ENCODE measurements at regions of chr1 and their contacts with region 1.

Region 1: DNA sequence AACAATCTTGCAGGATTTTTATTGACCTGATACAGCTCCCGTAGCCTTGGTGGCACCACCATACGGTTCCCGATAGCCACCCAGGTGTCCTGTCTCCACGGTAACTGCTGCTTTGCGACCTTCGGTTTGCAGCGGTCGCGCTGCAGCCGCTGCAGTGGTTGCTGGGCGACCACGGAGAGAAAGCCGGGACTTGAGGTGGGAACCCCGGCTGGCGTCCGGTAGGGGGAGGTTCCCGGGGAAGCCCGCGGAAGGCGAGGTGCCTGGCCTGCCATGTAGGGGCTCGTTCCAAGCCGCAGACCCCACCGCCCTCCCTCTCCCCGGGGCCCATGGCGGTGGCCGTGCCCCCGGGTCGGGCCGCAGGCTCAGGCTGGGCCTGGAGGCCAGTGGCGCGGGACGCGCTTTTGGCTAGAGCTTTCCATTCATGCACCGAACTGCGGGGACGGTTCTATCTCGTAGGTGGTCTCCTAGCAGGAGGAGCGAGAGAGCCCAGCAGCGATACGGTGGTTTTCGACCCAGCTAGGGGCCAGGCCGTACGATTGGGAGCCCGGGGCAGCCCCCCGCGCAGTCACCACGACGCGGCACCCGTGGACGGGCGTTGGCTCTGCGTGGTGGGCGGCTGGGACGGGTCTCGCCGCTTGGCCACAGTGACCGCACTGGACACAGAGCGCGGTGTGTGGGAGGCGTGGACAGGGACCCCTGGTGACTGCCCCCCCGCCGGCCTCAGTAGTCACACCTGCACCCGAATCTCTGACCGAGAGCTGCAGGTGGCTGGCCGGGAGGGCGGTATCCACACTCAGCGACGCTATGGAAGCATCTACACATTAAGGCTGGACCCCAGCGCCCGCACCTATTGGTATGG is at the start of gene KLHDC9:
- DNase-seq: peak; percentile 86
- ATAC-seq: peak; percentile 82
- H3K4me3 Mint-ChIP-seq: peak within 1 kb of the TSS; percentile 83
- H3K27ac Mint-ChIP-seq: peak within 1 kb of the TSS; percentile 87
- H3K4me1 Mint-ChIP-seq: peaks cover 45% of the 10 kb centered on the region
- H3K27me3 Mint-ChIP-seq: no peaks in the 10 kb centered on the region
- CTCF ChIP-seq: no peak
- total RNA-seq, gene KLHDC9: 0.43 TPM in 1 of 2 experiments, not detected in the other

Region 2: GRCh38 chr1:160997323-160998038 is 101.0 kb before region 1 on chr1:
- CTCF ChIA-PET with region 1: interaction called, 65 read pairs
- POLR2A ChIA-PET with region 1: interaction called, 19 read pairs
- intact Hi-C with region 1: loop called (anchors 5 kb)
- DNase-seq: peak; percentile 72
- ATAC-seq: peak; percentile 84
- H3K4me3 Mint-ChIP-seq: no peak overlapping the region
- H3K27ac Mint-ChIP-seq: peak overlapping the region; percentile 73
- H3K4me1 Mint-ChIP-seq: peaks cover 21% of the 10 kb centered on the region
- H3K27me3 Mint-ChIP-seq: no peaks in the 10 kb centered on the region
- CTCF ChIP-seq: peak; percentile 57

Region 3: GRCh38 chr1:161038523-161039153 is 59.8 kb before region 1 on chr1 and contains the start of gene TSTD1:
- CTCF ChIA-PET with region 1: interaction called, 79 read pairs
- POLR2A ChIA-PET with region 1: interaction called, 5 read pairs
- intact Hi-C with region 1: loop called (anchors 2 kb)
- DNase-seq: peak; percentile 93
- ATAC-seq: peak; percentile 85
- H3K4me3 Mint-ChIP-seq: peak within 1 kb of the TSS; percentile 91
- H3K27ac Mint-ChIP-seq: peak within 1 kb of the TSS; percentile 96
- H3K4me1 Mint-ChIP-seq: peaks cover 61% of the 10 kb centered on the region
- H3K27me3 Mint-ChIP-seq: no peaks in the 10 kb centered on the region
- CTCF ChIP-seq: no peak
- total RNA-seq, gene TSTD1: 70.8 to 78.7 TPM

Region 4: DNA sequence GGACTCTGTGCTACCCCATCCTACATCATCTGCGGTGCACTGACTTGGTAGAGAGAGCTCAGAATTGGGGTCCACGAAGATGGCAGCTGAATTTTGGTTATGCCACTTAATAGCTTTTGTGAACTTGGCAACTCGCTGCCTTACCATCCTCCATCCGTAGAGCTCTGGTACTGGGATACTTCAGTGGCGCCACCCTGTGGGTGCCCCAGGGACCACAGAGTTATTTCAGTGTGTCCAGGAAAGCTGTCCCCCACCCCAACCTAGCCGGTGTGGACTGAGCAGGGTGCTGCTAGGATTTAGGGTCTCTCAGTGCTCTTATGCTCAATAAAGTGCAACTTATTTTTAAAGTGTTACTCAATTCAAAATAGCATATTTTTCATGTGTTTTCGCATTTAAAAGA is 43.6 kb before region 1 on chr1:
- CTCF ChIA-PET with region 1: interaction called, 18 read pairs
- POLR2A ChIA-PET with region 1: interaction called, 4 read pairs
- intact Hi-C with region 1: no loop called
- DNase-seq: no peak
- ATAC-seq: no peak
- H3K4me3 Mint-ChIP-seq: no peak overlapping the region
- H3K27ac Mint-ChIP-seq: no peak overlapping the region
- H3K4me1 Mint-ChIP-seq: peaks cover 25% of the 10 kb centered on the region
- H3K27me3 Mint-ChIP-seq: no peaks in the 10 kb centered on the region
- CTCF ChIP-seq: no peak

Region 5: DNA sequence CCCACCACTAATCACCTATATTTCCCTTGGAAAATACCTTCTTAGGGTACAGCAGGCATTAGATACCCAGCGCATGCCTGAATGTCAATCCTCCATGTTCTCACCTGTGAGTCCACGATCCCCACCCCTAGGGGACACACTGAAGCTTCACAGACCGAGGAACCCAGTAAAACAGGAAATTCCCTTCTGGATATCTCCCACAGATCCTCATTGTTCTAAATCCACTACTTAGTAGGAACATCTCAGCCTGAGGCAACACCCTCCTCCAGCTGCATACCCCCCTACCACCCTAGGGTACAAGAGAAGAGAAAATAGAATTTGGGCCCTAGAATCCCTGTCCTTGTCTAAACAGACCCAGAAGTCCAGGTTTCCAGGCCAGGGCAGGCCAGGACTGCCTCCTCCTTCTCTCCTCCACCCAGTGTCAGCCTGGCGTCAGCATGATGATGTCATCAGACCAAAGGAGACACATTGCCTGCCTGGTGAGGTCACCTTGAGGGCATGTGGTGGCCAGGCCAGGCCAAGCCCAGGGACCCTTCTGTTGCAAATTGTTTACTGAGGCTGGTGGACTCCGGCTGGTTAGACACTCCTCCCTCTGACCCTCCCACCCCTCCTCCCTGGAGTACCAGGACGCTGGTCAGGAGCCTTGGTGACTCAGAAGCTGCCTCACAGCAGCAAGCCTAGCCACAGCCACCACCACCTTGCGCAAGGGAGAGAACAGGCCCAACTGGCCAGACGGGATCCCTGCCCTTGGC is 15.3 kb before region 1 on chr1:
- CTCF ChIA-PET with region 1: interaction called, 34 read pairs
- POLR2A ChIA-PET with region 1: interaction called, 8 read pairs
- intact Hi-C with region 1: no loop called
- DNase-seq: no peak
- ATAC-seq: peak; percentile 55
- H3K4me3 Mint-ChIP-seq: no peak overlapping the region
- H3K27ac Mint-ChIP-seq: no peak overlapping the region
- H3K4me1 Mint-ChIP-seq: no peaks in the 10 kb centered on the region
- H3K27me3 Mint-ChIP-seq: no peaks in the 10 kb centered on the region
- CTCF ChIP-seq: no peak

Region 6: GRCh38 chr1:161132410-161133219 is 34.2 kb after region 1 on chr1 and contains the start of gene DEDD:
- CTCF ChIA-PET with region 1: interaction called, 15 read pairs
- POLR2A ChIA-PET with region 1: interaction called, 3 read pairs
- intact Hi-C with region 1: no loop called
- DNase-seq: peak; percentile 95
- ATAC-seq: peak; percentile 95
- H3K4me3 Mint-ChIP-seq: no peak within 1 kb of the TSS
- H3K27ac Mint-ChIP-seq: no peak within 1 kb of the TSS
- H3K4me1 Mint-ChIP-seq: peaks cover 41% of the 10 kb centered on the region
- H3K27me3 Mint-ChIP-seq: no peaks in the 10 kb centered on the region
- CTCF ChIP-seq: no peak
- total RNA-seq, gene DEDD: 30.4 to 37.0 TPM

Region 7: GRCh38 chr1:161165742-161166668 is 67.6 kb after region 1 on chr1 and contains the start of gene PPOX:
- CTCF ChIA-PET with region 1: interaction called, 17 read pairs
- POLR2A ChIA-PET with region 1: interaction called, 3 read pairs
- intact Hi-C with region 1: no loop called
- DNase-seq: peak; percentile 97
- ATAC-seq: peak; percentile 94
- H3K4me3 Mint-ChIP-seq: peak within 1 kb of the TSS; percentile 82
- H3K27ac Mint-ChIP-seq: peak within 1 kb of the TSS; percentile 95
- H3K4me1 Mint-ChIP-seq: peaks cover 46% of the 10 kb centered on the region
- H3K27me3 Mint-ChIP-seq: no peaks in the 10 kb centered on the region
- CTCF ChIP-seq: peak; percentile 69
- total RNA-seq, gene PPOX: 24.4 to 24.9 TPM

Measured in activated CD8-positive, alpha-beta T cell treated with anti-CD3 and anti-CD28 coated beads for 36 hours (primary cell).